ENCODE measurements at regions of chr2 and their contacts with region 1.

Region 1: GRCh38 chr2:219642465-219643080 is 15.1 kb downstream of the SLC4A3 start:
- DNase-seq: peak; percentile 87
- H3K4me3 ChIP-seq: no peak overlapping the region
- H3K27ac ChIP-seq: no peak overlapping the region
- H3K4me1 ChIP-seq: peaks cover 20% of the 10 kb centered on the region
- H3K27me3 ChIP-seq: no peaks in the 10 kb centered on the region
- CTCF ChIP-seq: peak; percentile 100

Region 2: GRCh38 chr2:219543601-219544358 is 98.8 kb before region 1 on chr2 and contains the starts of genes CHPF and TMEM198:
- CTCF ChIA-PET with region 1: no interaction called
- dilution Hi-C with region 1: loop called (anchors 5 kb)
- in situ Hi-C with region 1: loop called in 1 of 2 experiments (anchors 5 kb)
- intact Hi-C with region 1: loop called (anchors 1 kb)
- DNase-seq: peak; percentile 98
- H3K4me3 ChIP-seq: peak within 1 kb of the TSS; percentile 74 to 88 (median 83)
- H3K27ac ChIP-seq: peak within 1 kb of the TSS; percentile 78
- H3K4me1 ChIP-seq: peaks cover 28% of the 10 kb centered on the region
- H3K27me3 ChIP-seq: no peaks in the 10 kb centered on the region
- CTCF ChIP-seq: no peak
- total RNA-seq, gene CHPF: 114 to 274 TPM
- total RNA-seq, gene TMEM198: 1.3 to 5.2 TPM

Region 3: DNA sequence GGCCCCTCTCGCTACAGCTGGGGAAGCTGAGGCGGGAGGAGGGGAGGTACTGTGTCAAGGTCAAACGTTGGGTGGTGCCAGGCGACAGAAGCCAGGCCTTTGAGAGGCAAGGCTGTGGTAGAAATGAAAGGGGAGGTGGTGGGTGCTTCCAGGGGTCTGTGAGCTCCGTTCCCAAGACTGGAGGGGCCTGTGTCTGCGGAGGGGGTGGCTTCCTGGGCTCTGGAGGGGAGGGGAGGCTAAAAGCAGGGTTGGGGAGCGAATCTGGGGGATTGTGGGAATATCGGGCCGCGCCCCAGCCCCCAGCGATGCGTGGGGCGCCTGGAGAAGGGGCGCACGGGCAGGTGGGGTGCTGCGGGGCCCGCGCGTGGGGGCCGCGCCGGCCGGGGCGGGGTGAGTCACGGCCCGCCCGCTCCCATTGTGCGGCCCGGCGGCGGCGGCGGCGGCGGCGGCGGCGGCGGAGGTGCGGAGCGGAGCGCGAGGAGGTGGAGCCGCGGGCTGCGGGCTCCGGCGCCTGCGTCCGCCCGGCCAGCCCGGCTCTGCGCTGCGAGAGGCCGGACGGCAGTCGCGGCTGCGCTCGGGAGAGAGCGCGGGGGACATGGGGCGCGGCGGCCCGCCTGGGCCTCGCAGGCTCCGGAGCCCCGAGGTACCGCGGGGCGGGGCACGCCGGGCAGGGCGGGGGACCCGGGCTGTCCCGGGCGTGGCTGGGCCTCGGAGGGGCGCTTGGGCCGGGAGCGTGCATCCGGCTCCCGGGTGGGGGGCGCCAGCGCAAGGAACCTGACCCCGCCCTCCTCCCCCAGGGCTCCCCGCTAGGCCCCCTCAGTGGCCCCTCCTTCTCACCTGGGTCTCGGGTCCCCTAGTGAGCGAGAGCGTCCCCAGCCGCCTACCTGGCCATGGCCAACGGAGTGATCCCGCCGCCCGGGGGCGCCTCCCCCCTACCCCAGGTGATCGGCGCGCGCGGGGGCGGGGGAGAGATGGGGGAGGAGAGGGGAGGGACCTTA is 15.2 kb before region 1 on chr2 and contains the start of gene SLC4A3:
- CTCF ChIA-PET with region 1: no interaction called
- dilution Hi-C with region 1: no loop called
- in situ Hi-C with region 1: no loop called
- intact Hi-C with region 1: loop called (anchors 1 kb)
- DNase-seq: peak; percentile 29
- H3K4me3 ChIP-seq: peak within 1 kb of the TSS; percentile 60 to 70 (median 63)
- H3K27ac ChIP-seq: no peak within 1 kb of the TSS
- H3K4me1 ChIP-seq: peaks cover 14% of the 10 kb centered on the region
- H3K27me3 ChIP-seq: no peaks in the 10 kb centered on the region
- CTCF ChIP-seq: peak in 1 of 2 donors; percentile 19
- total RNA-seq, gene SLC4A3: 12.5 to 30.0 TPM

Region 4: GRCh38 chr2:219661197-219661954 is 18.8 kb after region 1 on chr2:
- CTCF ChIA-PET with region 1: no interaction called
- dilution Hi-C with region 1: no loop called
- in situ Hi-C with region 1: no loop called
- intact Hi-C with region 1: loop called (anchors 1 kb)
- DNase-seq: peak; percentile 89
- H3K4me3 ChIP-seq: peak overlapping the region in 1 of 3 experiments; percentile 5
- H3K27ac ChIP-seq: peak overlapping the region; percentile 83
- H3K4me1 ChIP-seq: peaks cover 56% of the 10 kb centered on the region
- H3K27me3 ChIP-seq: no peaks in the 10 kb centered on the region
- CTCF ChIP-seq: no peak

Region 5: GRCh38 chr2:219675221-219675620 is 32.6 kb after region 1 on chr2:
- CTCF ChIA-PET with region 1: no interaction called
- dilution Hi-C with region 1: loop called (anchors 5 kb)
- in situ Hi-C with region 1: no loop called
- intact Hi-C with region 1: no loop called
- DNase-seq: peak; percentile 39
- H3K4me3 ChIP-seq: no peak overlapping the region
- H3K27ac ChIP-seq: no peak overlapping the region
- H3K4me1 ChIP-seq: no peaks in the 10 kb centered on the region
- H3K27me3 ChIP-seq: no peaks in the 10 kb centered on the region
- CTCF ChIP-seq: no peak

Measured in mammary epithelial cell (primary cell).